GM23248 (cell line): ENCODE measurements at regions of chr13 and their contacts with region 1.

Region 1: GRCh38 chr13:101144808-101145419 is 271.4 kb downstream of the NALCN start:
- DNase-seq: peak; percentile 75
- H3K4me3 ChIP-seq: no peak overlapping the region
- H3K27ac ChIP-seq: no peak overlapping the region
- H3K4me1 ChIP-seq: peaks cover 3% of the 10 kb centered on the region; the same call in 1 of the 2 replicates
- H3K27me3 ChIP-seq: peaks cover 8% of the 10 kb centered on the region; the same call in 1 of the 2 replicates

Region 2: DNA sequence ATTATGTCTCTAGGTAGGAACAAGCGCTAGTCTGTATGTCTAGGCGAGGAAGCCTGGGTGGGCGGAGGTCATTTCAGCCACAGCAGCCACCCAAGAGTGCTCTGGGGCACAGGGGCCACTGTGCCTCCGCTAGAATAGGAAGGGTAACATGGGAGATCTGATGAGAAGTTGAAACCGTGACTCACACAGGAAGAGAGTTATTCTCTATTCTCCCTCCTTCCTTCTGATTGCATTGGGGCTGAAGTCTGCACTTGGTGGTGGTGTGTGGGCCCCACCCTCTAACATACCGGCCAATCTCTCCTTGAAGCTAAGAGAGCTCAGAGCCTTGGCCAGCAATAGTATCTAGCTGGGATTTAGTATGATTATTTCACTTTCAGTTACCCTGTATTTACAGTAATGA is 536.0 kb before region 1 on chr13:
- in situ Hi-C with region 1: no loop called
- DNase-seq: no peak
- H3K4me3 ChIP-seq: no peak overlapping the region
- H3K27ac ChIP-seq: no peak overlapping the region
- H3K4me1 ChIP-seq: no peaks in the 10 kb centered on the region
- H3K27me3 ChIP-seq: no peaks in the 10 kb centered on the region

Region 3: GRCh38 chr13:101098873-101099272 is 46.0 kb before region 1 on chr13:
- in situ Hi-C with region 1: no loop called
- DNase-seq: no peak
- H3K4me3 ChIP-seq: no peak overlapping the region
- H3K27ac ChIP-seq: no peak overlapping the region
- H3K4me1 ChIP-seq: no peaks in the 10 kb centered on the region
- H3K27me3 ChIP-seq: no peaks in the 10 kb centered on the region

Region 4: GRCh38 chr13:101397742-101398141 is 252.8 kb after region 1 on chr13:
- in situ Hi-C with region 1: no loop called
- DNase-seq: peak; percentile 93
- H3K4me3 ChIP-seq: 0 out of 2 replicates have a peak overlapping the region, but pooled peaks have one; percentile 8
- H3K27ac ChIP-seq: peak overlapping the region; percentile 75
- H3K4me1 ChIP-seq: peaks cover 47% of the 10 kb centered on the region
- H3K27me3 ChIP-seq: no peaks in the 10 kb centered on the region

Region 5: DNA sequence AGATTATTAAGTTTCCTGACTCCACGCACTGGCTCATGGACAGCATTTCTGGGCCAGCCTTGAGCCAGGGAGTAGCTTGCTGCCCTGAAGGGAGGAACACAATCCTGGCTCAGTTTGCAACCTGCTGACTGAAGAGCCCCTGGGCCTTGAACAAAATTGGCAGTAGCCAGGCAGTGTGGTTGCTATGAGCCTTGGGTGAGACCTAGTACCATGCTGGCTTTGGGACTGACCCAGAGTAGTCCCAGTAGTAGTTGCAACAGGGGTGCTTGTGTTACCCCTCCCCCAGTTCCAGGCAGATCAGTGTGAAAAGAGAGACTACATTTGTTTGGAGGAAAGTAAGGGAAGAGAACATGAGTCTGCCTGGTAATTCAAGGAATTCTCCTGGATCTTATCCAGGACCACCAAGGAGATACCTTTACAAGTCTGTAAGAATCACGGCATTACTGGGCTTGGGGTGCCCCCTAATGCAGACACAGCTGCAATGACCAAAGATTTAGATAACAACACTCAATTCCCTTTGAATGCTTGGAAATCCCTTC is 329.6 kb after region 1 on chr13:
- in situ Hi-C with region 1: loop called (anchors 10 kb)
- DNase-seq: peak; percentile 69
- H3K4me3 ChIP-seq: no peak overlapping the region
- H3K27ac ChIP-seq: peak overlapping the region; percentile 38
- H3K4me1 ChIP-seq: peaks cover 26% of the 10 kb centered on the region
- H3K27me3 ChIP-seq: no peaks in the 10 kb centered on the region

Region 6: DNA sequence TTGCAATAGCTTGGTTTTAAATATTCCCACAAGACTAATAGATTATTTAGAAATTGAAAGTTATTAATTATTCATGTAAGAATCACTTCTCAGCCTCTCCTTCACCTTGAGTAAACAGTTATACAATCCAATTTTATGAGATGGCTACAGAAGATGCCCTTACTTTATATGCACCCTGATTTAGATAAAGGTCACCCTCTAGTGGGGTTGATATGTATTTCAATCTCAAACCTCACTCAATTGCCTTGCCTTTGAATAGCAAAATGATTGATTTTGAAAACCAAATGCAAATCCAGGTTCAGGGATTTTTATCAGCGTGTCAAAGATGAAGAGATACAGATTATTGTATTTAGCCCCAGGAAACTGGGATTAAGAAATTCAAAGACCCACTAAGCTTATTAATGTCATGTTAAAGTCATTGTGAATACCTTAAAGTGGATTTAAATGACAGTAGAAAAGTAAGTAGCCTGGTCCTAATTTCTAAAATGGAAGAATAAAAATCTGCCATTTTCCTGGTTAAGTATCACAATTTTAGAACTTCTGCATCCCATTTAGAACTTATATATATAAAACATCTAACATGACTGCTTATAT is 612.6 kb after region 1 on chr13:
- in situ Hi-C with region 1: loop called (anchors 10 kb)
- DNase-seq: peak; percentile 64
- H3K4me3 ChIP-seq: no peak overlapping the region
- H3K27ac ChIP-seq: no peak overlapping the region
- H3K4me1 ChIP-seq: no peaks in the 10 kb centered on the region
- H3K27me3 ChIP-seq: no peaks in the 10 kb centered on the region